AG04450 (cell line): ENCODE measurements at regions of chr17 and their contacts with region 1.

Region 1: DNA sequence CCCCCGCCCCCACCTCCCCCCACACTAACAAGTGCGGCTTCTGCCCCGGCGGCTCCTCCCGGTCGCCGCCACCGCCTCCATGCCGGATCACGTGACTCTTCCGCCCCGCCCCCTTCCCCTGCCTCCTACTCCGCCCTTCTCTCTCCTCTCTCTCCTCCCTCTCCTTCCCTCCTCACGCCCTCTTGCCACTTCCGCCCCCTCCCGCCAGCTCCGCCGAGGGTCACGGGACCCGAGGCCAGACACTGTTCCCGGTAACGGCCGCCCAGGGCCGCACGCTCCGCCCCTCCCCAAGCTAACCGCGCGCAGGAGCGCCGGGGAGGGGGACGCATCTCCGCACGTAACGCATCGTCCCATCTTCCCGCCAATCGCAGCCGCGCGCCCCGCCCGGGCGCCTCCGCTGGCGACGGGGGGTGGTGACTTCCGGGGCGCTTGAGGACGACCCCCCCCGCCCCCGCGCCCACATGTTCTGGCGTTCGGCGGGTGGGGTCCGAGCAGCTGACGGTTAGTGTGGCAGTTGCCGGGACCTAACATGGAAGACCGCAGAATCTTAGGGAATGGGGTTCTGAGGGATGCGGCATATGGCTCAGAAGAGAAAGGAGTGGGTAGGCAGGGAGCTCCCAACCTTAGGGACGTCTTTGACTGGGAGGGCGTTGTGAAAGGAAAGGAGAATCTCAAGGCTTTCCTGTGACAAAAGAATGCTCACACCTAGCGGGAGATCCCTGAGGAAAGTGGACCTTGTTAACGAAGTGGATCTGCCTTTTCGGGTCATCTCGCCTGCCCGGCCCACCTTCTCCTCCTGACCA is at the start of gene USP32:
- DNase-seq: peak; percentile 96
- H3K4me3 ChIP-seq: peak within 1 kb of the TSS; percentile 93
- H3K27ac ChIP-seq: peak within 1 kb of the TSS; percentile 94
- H3K27me3 ChIP-seq: no peaks in the 10 kb centered on the region
- CTCF ChIP-seq: peak; percentile 32
- polyA plus RNA-seq, gene USP32: 40.7 and 42.6 TPM in 2 replicates

Region 2: GRCh38 chr17:60231234-60231633 is 161.0 kb before region 1 on chr17:
- CTCF ChIA-PET with region 1: no interaction called
- POLR2A ChIA-PET with region 1: interaction called, 12 read pairs
- DNase-seq: no peak
- H3K4me3 ChIP-seq: no peak overlapping the region
- H3K27ac ChIP-seq: no peak overlapping the region
- H3K27me3 ChIP-seq: no peaks in the 10 kb centered on the region
- CTCF ChIP-seq: peak; percentile 63

Region 3: DNA sequence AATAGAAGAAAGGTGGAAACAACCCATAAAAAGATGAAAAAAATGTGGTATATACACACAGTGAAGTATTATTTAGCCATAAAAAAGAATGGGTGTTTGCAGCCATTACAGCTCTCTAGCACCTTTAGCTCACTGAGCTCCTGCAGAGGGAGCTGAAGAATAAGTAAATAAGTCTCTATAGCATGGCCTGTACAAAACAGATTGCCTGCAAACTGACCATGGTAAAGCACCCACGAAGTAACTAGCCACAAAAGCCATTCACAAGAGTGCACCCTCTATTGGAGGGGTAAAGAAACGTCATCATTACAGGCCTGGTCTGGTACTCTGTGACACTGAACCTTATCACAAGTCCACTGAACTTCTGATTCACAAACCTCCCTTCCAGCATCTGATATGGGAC is 76.6 kb before region 1 on chr17:
- CTCF ChIA-PET with region 1: no interaction called
- POLR2A ChIA-PET with region 1: no interaction called
- DNase-seq: no peak
- H3K4me3 ChIP-seq: no peak overlapping the region
- H3K27ac ChIP-seq: no peak overlapping the region
- H3K27me3 ChIP-seq: no peaks in the 10 kb centered on the region
- CTCF ChIP-seq: no peak

Region 4: DNA sequence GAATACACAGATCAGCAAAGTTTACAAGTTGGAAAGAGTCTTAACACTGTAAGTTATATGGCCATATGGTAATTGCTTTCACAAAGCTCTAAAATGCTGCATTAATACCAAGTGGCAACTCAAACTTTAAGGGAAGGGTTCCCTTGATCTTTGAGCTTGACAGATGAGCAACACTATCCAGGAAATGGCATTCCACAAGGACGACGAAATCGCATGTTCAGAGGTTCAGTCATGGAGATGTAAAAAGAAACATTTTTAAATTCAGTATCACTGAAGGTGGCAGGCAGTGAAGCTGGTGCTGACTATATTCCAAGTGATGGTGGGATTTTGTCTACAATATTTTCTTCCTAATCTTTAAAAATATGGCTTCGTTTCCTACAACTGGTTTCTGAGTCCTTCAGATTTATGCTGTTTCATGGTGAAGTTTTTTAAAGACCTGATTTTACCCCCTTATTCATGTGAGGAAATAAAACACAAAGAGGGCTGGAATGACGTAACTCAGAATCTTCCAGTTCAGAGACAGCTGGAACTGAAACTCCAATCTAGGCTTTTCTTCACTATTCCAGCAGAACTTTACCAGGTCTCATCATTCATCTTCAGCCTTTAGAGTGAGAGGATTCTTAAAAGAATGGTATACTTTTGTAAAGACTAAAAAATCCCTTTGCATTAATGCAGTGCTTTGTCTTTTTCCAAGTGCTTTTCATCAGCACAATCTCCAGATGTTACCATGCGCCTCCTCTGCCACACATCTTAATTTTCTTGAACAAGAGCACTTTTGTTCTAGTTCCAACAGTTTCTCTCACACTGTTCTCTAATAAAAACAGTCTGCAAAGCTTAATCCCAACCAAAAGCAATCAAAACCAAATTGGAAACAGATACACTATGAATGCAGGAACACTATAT is 50.3 kb after region 1 on chr17:
- CTCF ChIA-PET with region 1: no interaction called
- POLR2A ChIA-PET with region 1: interaction called, 10 read pairs
- DNase-seq: no peak
- H3K4me3 ChIP-seq: no peak overlapping the region
- H3K27ac ChIP-seq: no peak overlapping the region
- H3K27me3 ChIP-seq: no peaks in the 10 kb centered on the region
- CTCF ChIP-seq: no peak